Activated CD4-positive, alpha-beta T cell treated with anti-CD3 and anti-CD28 coated beads for 36 hours (primary cell): ENCODE measurements at regions of chr3 and their contacts with region 1.

Region 1: DNA sequence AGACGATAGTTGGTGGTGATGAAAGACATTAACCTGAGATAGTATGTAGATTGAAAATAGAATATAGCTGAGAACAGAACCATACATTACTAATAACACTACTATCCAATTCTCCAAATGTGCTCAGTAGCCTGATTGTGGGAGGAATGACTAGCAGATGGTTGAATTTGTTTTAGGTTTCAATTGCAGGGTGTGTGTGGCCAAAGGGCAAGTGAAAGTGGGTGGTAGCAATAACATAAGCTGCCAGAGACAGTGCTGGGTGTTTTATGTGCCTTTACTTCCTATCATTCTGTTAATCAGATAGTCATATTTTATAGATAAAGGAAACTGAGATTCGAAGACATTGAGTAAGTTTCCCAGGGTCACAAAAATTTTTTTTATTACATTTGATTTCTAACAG is 249.5 kb upstream of the ARL6 start:
- DNase-seq: no peak
- ATAC-seq: no peak
- H3K4me3 Mint-ChIP-seq: no peak overlapping the region
- H3K27ac Mint-ChIP-seq: no peak overlapping the region
- H3K4me1 Mint-ChIP-seq: no peaks in the 10 kb centered on the region
- H3K27me3 Mint-ChIP-seq: no peaks in the 10 kb centered on the region

Region 2: DNA sequence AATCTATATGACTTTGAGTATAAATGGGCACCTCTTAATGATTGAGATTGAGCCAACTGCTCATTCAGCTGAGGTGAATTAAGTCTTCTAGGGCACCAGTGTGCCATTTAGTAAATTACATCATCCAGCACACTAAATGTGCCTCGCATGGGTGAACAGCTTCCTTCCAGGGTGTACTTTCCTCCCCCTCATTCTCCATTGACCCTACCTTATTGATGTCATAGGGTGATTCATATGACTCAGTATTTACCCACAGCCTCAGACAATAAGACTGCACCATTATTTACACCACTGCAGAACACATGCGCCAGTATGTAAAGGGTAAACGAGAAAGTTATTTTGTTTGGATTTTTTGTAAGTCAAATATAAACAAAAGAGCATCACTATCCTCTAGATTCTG is 64.3 kb after region 1 on chr3:
- CTCF ChIA-PET with region 1: no interaction called
- POLR2A ChIA-PET with region 1: no interaction called
- intact Hi-C with region 1: loop called in 1 of 2 experiments (anchors 10 kb)
- DNase-seq: no peak
- ATAC-seq: no peak
- H3K4me3 Mint-ChIP-seq: no peak overlapping the region
- H3K27ac Mint-ChIP-seq: no peak overlapping the region
- H3K4me1 Mint-ChIP-seq: no peaks in the 10 kb centered on the region
- H3K27me3 Mint-ChIP-seq: no peaks in the 10 kb centered on the region